ENCODE measurements at regions of chr1 and their contacts with region 1.

Region 1: GRCh38 chr1:8423650-8424538 is 106.0 kb downstream of the SLC45A1 start:
- DNase-seq: peak; percentile 54 to 60
- ATAC-seq: peak; percentile 43 to 63 (median 58)
- H3K4me3 ChIP-seq: peak overlapping the region; percentile 67 to 88 (median 83)
- H3K27ac ChIP-seq: peak overlapping the region; percentile 95 to 99 (median 98)
- H3K4me1 ChIP-seq: peaks cover 7 to 85% (median 65%) of the 10 kb centered on the region in 9 donors
- H3K27me3 ChIP-seq: no peaks in the 10 kb centered on the region
- CTCF ChIP-seq: peak in 4 of 9 donors; percentile 13 to 28 (median 20)

Region 2: DNA sequence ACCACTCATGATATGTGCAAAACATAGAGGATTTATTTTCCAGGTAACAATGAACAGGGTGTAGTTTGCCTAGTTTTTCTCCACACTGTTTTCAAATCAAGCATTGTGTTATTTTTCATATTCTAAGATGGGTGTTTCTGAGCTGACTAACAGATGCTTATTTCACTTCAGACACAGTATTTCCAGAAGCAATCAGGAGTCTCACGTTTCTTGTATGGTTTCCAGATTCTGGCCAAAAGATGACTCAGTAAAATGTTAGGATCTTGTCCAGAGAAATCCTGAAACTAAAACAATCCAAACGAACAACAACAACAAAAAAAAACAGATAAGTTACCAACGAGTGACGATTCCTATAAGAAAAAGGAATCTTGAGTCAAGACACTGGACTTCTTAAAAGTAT is 576.3 kb before region 1 on chr1:
- intact Hi-C with region 1: no loop called
- DNase-seq: no peak
- ATAC-seq: no peak
- H3K4me3 ChIP-seq: no peak overlapping the region
- H3K27ac ChIP-seq: no peak overlapping the region
- H3K4me1 ChIP-seq: no peaks in the 10 kb centered on the region
- H3K27me3 ChIP-seq: no peaks in the 10 kb centered on the region
- CTCF ChIP-seq: no peak

Region 3: GRCh38 chr1:8374812-8375211 is 49.1 kb before region 1 on chr1:
- intact Hi-C with region 1: loop called in 5 of 10 experiments (anchors 5 kb)
- DNase-seq: peak in 1 of 2 donors; percentile 16
- ATAC-seq: no peak
- H3K4me3 ChIP-seq: no peak overlapping the region
- H3K27ac ChIP-seq: peak overlapping the region; percentile 83 to 93 (median 88)
- H3K4me1 ChIP-seq: peaks cover 47 to 96% (median 82%) of the 10 kb centered on the region in 9 donors
- H3K27me3 ChIP-seq: no peaks in the 10 kb centered on the region
- CTCF ChIP-seq: peak in 7 of 9 donors; percentile 24 to 47 (median 37)

Region 4: DNA sequence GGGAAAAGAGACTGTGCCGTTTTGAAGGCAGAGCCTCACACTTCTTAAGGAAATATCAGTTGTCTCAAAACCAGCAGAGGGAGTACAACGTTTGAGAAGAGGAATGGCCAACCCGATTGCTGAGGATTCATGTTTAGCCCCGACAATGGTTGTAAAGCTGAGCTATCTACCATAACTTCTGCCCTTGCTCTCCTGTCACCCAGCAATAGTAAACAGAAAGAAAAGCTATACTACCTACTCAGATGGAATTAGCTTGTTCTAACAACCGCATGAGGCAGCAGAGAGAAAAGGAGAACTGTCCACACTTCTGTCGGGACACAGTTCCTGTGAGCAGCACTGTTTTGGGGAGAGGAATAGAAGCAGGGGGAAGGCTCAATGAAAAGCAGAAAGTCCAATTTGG is 14.8 kb before region 1 on chr1:
- intact Hi-C with region 1: loop called in 1 of 10 experiments (anchors 2 kb)
- DNase-seq: peak in 1 of 2 donors; percentile 44
- ATAC-seq: peak; percentile 24 to 70 (median 54)
- H3K4me3 ChIP-seq: peak overlapping the region in 1 of 10 donors; percentile 5
- H3K27ac ChIP-seq: peak overlapping the region; percentile 63 to 96 (median 84)
- H3K4me1 ChIP-seq: peaks cover 53 to 97% (median 81%) of the 10 kb centered on the region in 9 donors
- H3K27me3 ChIP-seq: no peaks in the 10 kb centered on the region
- CTCF ChIP-seq: peak; percentile 15 to 67 (median 45)

Region 5: GRCh38 chr1:8439015-8439702 is 15.3 kb after region 1 on chr1:
- intact Hi-C with region 1: loop called in 1 of 10 experiments (anchors 1 kb)
- DNase-seq: peak; percentile 77 to 89
- ATAC-seq: peak; percentile 81 to 96 (median 94)
- H3K4me3 ChIP-seq: no peak overlapping the region
- H3K27ac ChIP-seq: peak overlapping the region in 8 of 10 donors; percentile 4 to 81 (median 45)
- H3K4me1 ChIP-seq: peaks cover 2 to 33% (median 22%) of the 10 kb centered on the region in 9 donors
- H3K27me3 ChIP-seq: no peaks in the 10 kb centered on the region
- CTCF ChIP-seq: no peak

Region 6: DNA sequence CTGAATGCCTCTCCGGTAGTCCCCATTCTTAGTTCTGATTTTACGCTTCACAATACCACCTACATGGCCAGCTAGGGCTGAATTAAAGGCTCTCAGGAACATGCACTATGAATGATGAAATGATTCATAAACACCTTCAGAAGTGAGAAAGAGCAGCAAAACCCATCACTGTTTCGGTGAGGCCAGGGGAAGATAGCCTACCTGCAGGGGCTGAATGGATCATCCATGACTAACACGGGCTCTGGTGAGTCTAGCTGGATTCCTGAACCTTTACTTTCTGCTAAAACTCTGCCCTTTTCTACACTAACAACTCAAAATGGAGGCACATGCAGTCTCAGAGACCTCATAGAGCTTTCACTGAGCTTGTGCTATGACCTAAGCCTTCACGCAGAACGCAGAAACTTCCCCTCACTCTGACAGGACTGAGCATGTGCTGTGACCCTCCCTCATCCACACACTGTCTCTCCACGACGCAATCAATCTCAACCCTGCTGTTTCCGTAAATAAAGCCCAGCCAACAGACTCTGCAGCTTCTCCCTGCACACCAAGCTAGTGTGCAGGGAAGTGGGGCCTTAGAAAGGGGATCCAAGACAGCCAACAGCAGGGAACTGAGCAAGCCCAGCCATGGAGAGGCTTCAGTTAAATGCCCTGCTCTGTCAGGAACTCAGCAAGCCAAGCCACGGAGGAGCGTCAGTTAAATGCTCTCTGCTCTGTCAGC is 101.8 kb after region 1 on chr1:
- intact Hi-C with region 1: loop called in 3 of 10 experiments (anchors 5 to 10 kb)
- DNase-seq: peak; percentile 50 to 92
- ATAC-seq: peak; percentile 98 to 99 (median 99)
- H3K4me3 ChIP-seq: peak overlapping the region; percentile 0 to 64 (median 60)
- H3K27ac ChIP-seq: peak overlapping the region; percentile 46 to 93 (median 86)
- H3K4me1 ChIP-seq: peaks cover 10 to 57% (median 48%) of the 10 kb centered on the region in 9 donors
- H3K27me3 ChIP-seq: no peaks in the 10 kb centered on the region
- CTCF ChIP-seq: no peak

Region 7: DNA sequence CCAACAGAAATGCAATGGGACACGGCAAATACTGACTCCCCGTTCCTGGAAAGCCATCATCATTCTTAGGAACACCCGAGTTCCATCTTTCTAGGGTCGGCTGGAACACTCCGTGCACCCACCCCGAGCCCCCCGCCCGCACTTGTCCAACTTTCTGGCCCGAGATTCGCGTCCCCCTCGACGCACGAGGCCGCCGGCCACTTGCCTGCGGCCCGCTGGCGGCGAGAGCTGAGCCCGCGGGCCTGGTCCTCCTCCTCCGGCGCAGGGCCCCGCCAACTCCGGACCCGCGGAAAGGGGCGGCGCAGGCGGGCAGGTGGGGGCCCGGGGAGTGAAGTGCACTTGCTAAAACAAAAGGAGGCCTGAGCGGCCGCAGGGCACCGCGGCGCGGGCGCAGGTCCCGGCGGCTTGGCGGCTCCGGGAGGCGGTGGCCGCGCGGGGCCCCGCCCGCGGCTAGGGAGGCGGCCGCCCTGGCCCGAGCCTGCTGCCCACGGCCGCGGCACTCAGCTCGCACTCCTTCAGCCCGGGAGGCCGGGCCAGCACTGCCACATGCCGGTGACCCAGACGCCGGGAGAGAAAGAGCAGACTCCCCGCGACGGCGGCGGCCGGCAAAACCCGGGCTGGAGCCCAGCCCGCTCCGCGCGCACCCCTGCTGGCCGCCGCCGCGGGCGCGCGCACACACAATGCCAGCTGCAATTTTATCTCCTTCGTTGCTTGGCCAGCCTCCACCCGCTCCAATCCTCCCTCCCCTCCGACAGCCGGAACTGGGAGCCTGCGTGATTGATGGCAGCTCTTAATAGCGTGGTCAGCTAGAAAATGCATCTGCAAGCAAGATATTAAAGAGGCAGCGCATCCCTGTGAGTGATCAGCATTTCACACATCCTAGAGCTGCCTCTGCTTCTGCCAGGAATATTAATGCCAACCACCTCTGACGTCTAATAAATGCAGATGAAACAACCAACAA is 279.2 kb after region 1 on chr1:
- intact Hi-C with region 1: loop called in 3 of 10 experiments (anchors 5 to 10 kb)
- DNase-seq: peak; percentile 90 to 92
- ATAC-seq: peak; percentile 92 to 97 (median 95)
- H3K4me3 ChIP-seq: peak overlapping the region; percentile 51 to 89 (median 67)
- H3K27ac ChIP-seq: peak overlapping the region; percentile 77 to 92 (median 86)
- H3K4me1 ChIP-seq: peaks cover 4 to 77% (median 49%) of the 10 kb centered on the region in 9 donors
- H3K27me3 ChIP-seq: no peaks in the 10 kb centered on the region
- CTCF ChIP-seq: peak in 5 of 9 donors; percentile 10 to 45 (median 40)